WTC11 (cell line): ENCODE measurements at regions of chr3 and their contacts with region 1.

Region 1: GRCh38 chr3:195511136-195511535 is 32.0 kb downstream of the PPP1R2 start:
- DNase-seq: no peak
- ATAC-seq: no peak
- H3K4me3 Mint-ChIP-seq: no peak overlapping the region
- H3K27ac Mint-ChIP-seq: no peak overlapping the region
- H3K4me1 Mint-ChIP-seq: no peaks in the 10 kb centered on the region
- H3K27me3 Mint-ChIP-seq: no peaks in the 10 kb centered on the region
- CTCF ChIP-seq: no peak

Region 2: GRCh38 chr3:195080571-195081151 is 430.5 kb before region 1 on chr3:
- CTCF ChIA-PET with region 1: no interaction called
- POLR2A ChIA-PET with region 1: no interaction called
- DNase-seq: no peak
- ATAC-seq: peak; percentile 14; the same call in 1 of the 2 replicates
- H3K4me3 Mint-ChIP-seq: no peak overlapping the region
- H3K27ac Mint-ChIP-seq: no peak overlapping the region
- H3K4me1 Mint-ChIP-seq: peaks cover 42% of the 10 kb centered on the region
- H3K27me3 Mint-ChIP-seq: no peaks in the 10 kb centered on the region
- CTCF ChIP-seq: no peak

Region 3: DNA sequence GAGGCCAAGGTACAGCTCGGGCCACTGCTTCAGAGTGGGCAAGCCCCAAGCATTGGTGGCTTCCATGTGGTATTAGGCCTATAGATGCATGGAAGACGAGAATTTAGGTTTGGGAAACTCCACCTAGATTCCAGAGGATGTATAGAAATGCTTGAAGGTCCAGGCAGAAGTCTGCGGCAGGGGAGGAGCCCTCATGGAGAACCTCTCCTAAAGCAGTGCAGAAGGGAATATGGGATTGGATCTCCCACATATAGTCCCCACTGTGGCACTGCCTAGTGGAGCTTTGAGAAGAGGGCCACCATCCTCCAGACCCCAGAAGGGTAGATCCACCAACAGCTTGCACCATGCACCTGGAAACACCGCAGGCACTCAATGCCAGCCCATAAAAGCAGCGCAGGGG is 192.1 kb before region 1 on chr3:
- CTCF ChIA-PET with region 1: no interaction called
- POLR2A ChIA-PET with region 1: no interaction called
- DNase-seq: no peak
- ATAC-seq: no peak
- H3K4me3 Mint-ChIP-seq: no peak overlapping the region
- H3K27ac Mint-ChIP-seq: no peak overlapping the region
- H3K4me1 Mint-ChIP-seq: no peaks in the 10 kb centered on the region
- H3K27me3 Mint-ChIP-seq: no peaks in the 10 kb centered on the region; the same call in 1 of the 2 replicates
- CTCF ChIP-seq: no peak

Region 4: GRCh38 chr3:195348426-195349118 is 162.6 kb before region 1 on chr3:
- CTCF ChIA-PET with region 1: no interaction called
- POLR2A ChIA-PET with region 1: interaction called, 11 read pairs
- DNase-seq: no peak
- ATAC-seq: no peak
- H3K4me3 Mint-ChIP-seq: no peak overlapping the region
- H3K27ac Mint-ChIP-seq: peak overlapping the region; percentile 30; the same call in 1 of the 2 replicates
- H3K4me1 Mint-ChIP-seq: peaks cover 3% of the 10 kb centered on the region; the same call in 1 of the 2 replicates
- H3K27me3 Mint-ChIP-seq: no peaks in the 10 kb centered on the region
- CTCF ChIP-seq: no peak

Region 5: GRCh38 chr3:195596765-195597171 is 85.6 kb after region 1 on chr3:
- CTCF ChIA-PET with region 1: no interaction called
- POLR2A ChIA-PET with region 1: no interaction called
- DNase-seq: no peak
- ATAC-seq: no peak
- H3K4me3 Mint-ChIP-seq: no peak overlapping the region
- H3K27ac Mint-ChIP-seq: no peak overlapping the region
- H3K4me1 Mint-ChIP-seq: no peaks in the 10 kb centered on the region
- H3K27me3 Mint-ChIP-seq: peaks cover 16% of the 10 kb centered on the region
- CTCF ChIP-seq: no peak

Region 6: GRCh38 chr3:195609229-195609628 is 98.1 kb after region 1 on chr3:
- CTCF ChIA-PET with region 1: no interaction called
- POLR2A ChIA-PET with region 1: no interaction called
- DNase-seq: no peak
- ATAC-seq: no peak
- H3K4me3 Mint-ChIP-seq: no peak overlapping the region
- H3K27ac Mint-ChIP-seq: no peak overlapping the region
- H3K4me1 Mint-ChIP-seq: no peaks in the 10 kb centered on the region; the same call in 1 of the 2 replicates
- H3K27me3 Mint-ChIP-seq: peaks cover 24% of the 10 kb centered on the region
- CTCF ChIP-seq: no peak